ENCODE measurements at regions of chr13 and their contacts with region 1.

Region 1: DNA sequence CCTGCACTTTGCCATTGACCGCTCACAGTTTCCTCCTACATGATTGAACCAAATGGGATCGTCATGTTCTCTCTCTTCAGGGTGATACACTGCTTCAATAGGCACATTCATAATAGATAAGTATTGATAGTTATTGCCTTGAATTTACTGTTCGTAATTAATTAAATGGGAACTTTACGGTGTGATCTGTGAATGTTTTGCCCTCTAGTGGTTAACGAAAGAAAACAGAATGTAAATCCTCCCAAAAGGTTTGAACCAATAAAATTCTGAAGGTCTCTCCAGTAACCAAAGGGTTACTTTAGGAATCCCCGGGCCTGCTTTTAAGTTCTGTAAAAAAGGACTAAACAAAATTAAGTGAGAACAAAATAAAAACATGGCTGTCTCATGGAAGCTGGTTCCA is 389.3 kb downstream of the DACH1 start:
- DNase-seq: no peak
- ATAC-seq: no peak
- H3K4me3 ChIP-seq: no peak overlapping the region
- H3K27ac ChIP-seq: no peak overlapping the region
- H3K4me1 ChIP-seq: no peaks in the 10 kb centered on the region
- H3K27me3 ChIP-seq: no peaks in the 10 kb centered on the region
- CTCF ChIP-seq: 0 out of 2 replicates have a peak, but pooled peaks have one; percentile 4
- POLR2A ChIP-seq: no peak
- RAD21 ChIP-seq: no peak

Region 2: DNA sequence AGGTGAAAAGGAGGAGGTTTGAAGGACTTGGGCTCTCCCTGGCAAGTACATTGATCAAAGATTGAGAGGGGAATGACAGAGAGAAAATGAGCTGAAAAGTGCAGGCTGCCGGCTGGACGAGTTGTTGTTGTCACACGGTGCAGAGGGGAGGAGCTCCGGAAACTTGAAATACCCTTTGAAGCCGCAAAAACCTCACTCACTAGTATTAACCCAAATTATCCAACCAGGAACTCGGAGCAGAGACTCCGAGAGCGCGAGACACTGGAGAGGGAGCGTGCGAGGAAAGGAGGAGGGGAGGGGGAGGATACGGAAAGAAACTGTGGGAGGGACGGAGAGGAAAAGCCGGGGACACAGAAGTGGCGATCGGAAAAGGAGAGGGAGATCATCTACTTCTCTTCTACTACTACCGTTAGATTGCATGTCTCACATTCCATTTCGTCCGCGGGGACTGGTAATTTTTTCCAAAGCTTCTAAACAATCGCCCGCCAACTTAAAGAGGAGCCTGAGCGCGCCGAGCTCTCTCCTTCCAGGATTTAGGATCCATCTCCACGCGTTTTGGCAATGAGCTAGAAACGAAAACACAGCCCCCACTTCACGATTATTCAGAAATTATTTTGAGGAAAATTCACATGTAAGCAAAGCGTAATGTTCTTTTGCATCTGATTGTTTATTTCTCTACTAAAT is 389.5 kb after region 1 on chr13 and contains the start of gene DACH1:
- CTCF ChIA-PET with region 1: no interaction called
- POLR2A ChIA-PET with region 1: no interaction called
- dilution Hi-C with region 1: no loop called
- in situ Hi-C with region 1: no loop called
- intact Hi-C with region 1: loop called (anchors 10 kb)
- DNase-seq: peak; percentile 20
- ATAC-seq: peak; percentile 71
- H3K4me3 ChIP-seq: peak within 1 kb of the TSS; percentile 42
- H3K27ac ChIP-seq: no peak within 1 kb of the TSS
- H3K4me1 ChIP-seq: no peaks in the 10 kb centered on the region
- H3K27me3 ChIP-seq: peaks cover 29% of the 10 kb centered on the region
- CTCF ChIP-seq: no peak
- POLR2A ChIP-seq: no peak
- RAD21 ChIP-seq: no peak
- total RNA-seq, gene DACH1: not detected in 2 replicates